Naive thymus-derived CD4-positive, alpha-beta T cell (primary cell): ENCODE measurements at regions of chr1 and their contacts with region 1.

Region 1: GRCh38 chr1:24321697-24322469 is 2.7 kb downstream of the GRHL3 start:
- DNase-seq: peak; percentile 34 to 77 (median 65)
- ATAC-seq: peak; percentile 80
- H3K4me3 ChIP-seq: peak overlapping the region; percentile 42
- H3K4me3 Mint-ChIP-seq: peak overlapping the region; percentile 86 to 95 (median 90)
- H3K27ac ChIP-seq: no peak overlapping the region
- H3K27ac Mint-ChIP-seq: peak overlapping the region in 6 of 9 donors; percentile 9 to 81 (median 71)
- H3K4me1 ChIP-seq: peaks cover 22 to 43% of the 10 kb centered on the region in 2 donors
- H3K4me1 Mint-ChIP-seq: peaks cover 36 to 54% (median 47%) of the 10 kb centered on the region in 7 donors
- H3K27me3 ChIP-seq: peaks cover 0 to 11% of the 10 kb centered on the region in 2 donors
- H3K27me3 Mint-ChIP-seq: peaks cover 0 to 96% (median 44%) of the 10 kb centered on the region in 5 donors

Region 2: GRCh38 chr1:24226749-24227148 is 95.1 kb before region 1 on chr1:
- CTCF ChIA-PET with region 1: no interaction called
- POLR2A ChIA-PET with region 1: interaction called, 10 read pairs
- intact Hi-C with region 1: no loop called
- DNase-seq: no peak
- ATAC-seq: no peak
- H3K4me3 ChIP-seq: no peak overlapping the region
- H3K4me3 Mint-ChIP-seq: no peak overlapping the region
- H3K27ac ChIP-seq: no peak overlapping the region
- H3K27ac Mint-ChIP-seq: no peak overlapping the region
- H3K4me1 ChIP-seq: no peaks in the 10 kb centered on the region
- H3K4me1 Mint-ChIP-seq: peaks cover 0 to 2% (median 0%) of the 10 kb centered on the region in 7 donors
- H3K27me3 ChIP-seq: no peaks in the 10 kb centered on the region
- H3K27me3 Mint-ChIP-seq: peaks cover 0 to 23% (median 0%) of the 10 kb centered on the region in 5 donors

Region 3: GRCh38 chr1:24351918-24352627 is 30.2 kb after region 1 on chr1:
- CTCF ChIA-PET with region 1: no interaction called
- POLR2A ChIA-PET with region 1: no interaction called
- intact Hi-C with region 1: loop called in 1 of 2 experiments (anchors 2 kb)
- DNase-seq: peak in 1 of 9 donors; percentile 54
- ATAC-seq: no peak
- H3K4me3 ChIP-seq: no peak overlapping the region
- H3K4me3 Mint-ChIP-seq: peak overlapping the region in 1 of 10 donors; percentile 35
- H3K27ac ChIP-seq: no peak overlapping the region
- H3K27ac Mint-ChIP-seq: peak overlapping the region in 4 of 9 donors; percentile 21 to 51 (median 42)
- H3K4me1 ChIP-seq: no peaks in the 10 kb centered on the region
- H3K4me1 Mint-ChIP-seq: peaks cover 9 to 38% (median 27%) of the 10 kb centered on the region in 7 donors
- H3K27me3 ChIP-seq: no peaks in the 10 kb centered on the region
- H3K27me3 Mint-ChIP-seq: peaks cover 0 to 4% (median 0%) of the 10 kb centered on the region in 5 donors

Region 4: GRCh38 chr1:24385160-24385940 is 63.5 kb after region 1 on chr1:
- CTCF ChIA-PET with region 1: no interaction called
- POLR2A ChIA-PET with region 1: no interaction called
- intact Hi-C with region 1: loop called in 1 of 2 experiments (anchors 2 kb)
- DNase-seq: peak in 7 of 9 donors; percentile 9 to 33 (median 24)
- ATAC-seq: peak; percentile 61
- H3K4me3 ChIP-seq: no peak overlapping the region
- H3K4me3 Mint-ChIP-seq: peak overlapping the region in 1 of 10 donors; percentile 50
- H3K27ac ChIP-seq: no peak overlapping the region
- H3K27ac Mint-ChIP-seq: peak overlapping the region in 1 of 9 donors; percentile 90
- H3K4me1 ChIP-seq: no peaks in the 10 kb centered on the region
- H3K4me1 Mint-ChIP-seq: peaks cover 0 to 30% (median 9%) of the 10 kb centered on the region in 7 donors
- H3K27me3 ChIP-seq: no peaks in the 10 kb centered on the region
- H3K27me3 Mint-ChIP-seq: no peaks in the 10 kb centered on the region